ENCODE measurements at regions of chr2 and their contacts with region 1.

Region 1: GRCh38 chr2:237291138-237291792 is 122.7 kb downstream of the COL6A3 start:
- DNase-seq: peak; percentile 98
- H3K4me3 Mint-ChIP-seq: peak overlapping the region; percentile 63
- H3K27ac Mint-ChIP-seq: peak overlapping the region; percentile 99
- H3K4me1 Mint-ChIP-seq: peaks cover 40% of the 10 kb centered on the region
- H3K27me3 Mint-ChIP-seq: no peaks in the 10 kb centered on the region
- CTCF ChIP-seq: no peak

Region 2: DNA sequence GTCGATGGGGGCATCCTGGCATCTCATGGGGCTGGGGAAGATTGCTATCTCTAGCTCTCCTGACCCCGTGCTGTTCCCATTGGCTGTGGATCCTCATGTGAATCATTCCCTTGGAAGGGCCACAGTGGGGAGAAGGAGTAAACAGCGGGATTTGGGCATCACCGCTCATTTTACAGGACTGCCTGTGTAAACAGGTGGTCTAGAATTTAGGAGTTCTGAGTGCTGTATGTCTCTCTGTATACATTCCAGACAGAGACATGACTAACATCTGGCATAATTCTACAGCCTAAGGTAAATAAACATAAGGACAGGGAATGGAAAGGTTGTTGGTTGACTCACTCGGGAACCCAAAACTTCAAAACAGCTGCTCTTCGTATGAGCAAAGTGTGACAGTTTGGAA is 112.9 kb before region 1 on chr2:
- CTCF ChIA-PET with region 1: interaction called, 4 read pairs
- POLR2A ChIA-PET with region 1: interaction called, 3 read pairs
- intact Hi-C with region 1: loop called (anchors 1 kb)
- DNase-seq: peak; percentile 81
- H3K4me3 Mint-ChIP-seq: no peak overlapping the region
- H3K27ac Mint-ChIP-seq: peak overlapping the region; percentile 54
- H3K4me1 Mint-ChIP-seq: peaks cover 28% of the 10 kb centered on the region
- H3K27me3 Mint-ChIP-seq: no peaks in the 10 kb centered on the region
- CTCF ChIP-seq: no peak

Region 3: DNA sequence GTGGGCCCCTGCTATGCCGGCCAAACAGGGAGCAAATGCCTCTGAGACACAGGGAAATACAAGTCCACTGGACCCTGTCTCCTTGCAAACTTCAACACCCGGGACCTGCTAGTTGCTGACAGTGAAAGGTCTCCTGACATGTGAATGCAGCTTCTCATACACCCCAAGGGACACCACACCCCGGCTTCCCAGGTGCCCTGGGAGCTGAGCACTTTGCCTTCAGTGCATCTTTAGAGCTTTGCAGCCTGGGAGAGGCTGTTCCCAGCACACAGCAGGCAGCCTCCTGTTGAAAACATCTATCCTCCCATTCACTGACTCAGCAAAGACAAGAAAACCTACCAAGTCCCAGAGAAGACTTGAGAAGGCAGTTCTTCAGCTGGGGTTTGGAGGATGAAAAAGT is 20.7 kb before region 1 on chr2:
- CTCF ChIA-PET with region 1: interaction called, 3 read pairs
- POLR2A ChIA-PET with region 1: interaction called, 10 read pairs
- intact Hi-C with region 1: no loop called
- DNase-seq: no peak
- H3K4me3 Mint-ChIP-seq: no peak overlapping the region
- H3K27ac Mint-ChIP-seq: no peak overlapping the region
- H3K4me1 Mint-ChIP-seq: peaks cover 4% of the 10 kb centered on the region
- H3K27me3 Mint-ChIP-seq: no peaks in the 10 kb centered on the region
- CTCF ChIP-seq: no peak

Region 4: DNA sequence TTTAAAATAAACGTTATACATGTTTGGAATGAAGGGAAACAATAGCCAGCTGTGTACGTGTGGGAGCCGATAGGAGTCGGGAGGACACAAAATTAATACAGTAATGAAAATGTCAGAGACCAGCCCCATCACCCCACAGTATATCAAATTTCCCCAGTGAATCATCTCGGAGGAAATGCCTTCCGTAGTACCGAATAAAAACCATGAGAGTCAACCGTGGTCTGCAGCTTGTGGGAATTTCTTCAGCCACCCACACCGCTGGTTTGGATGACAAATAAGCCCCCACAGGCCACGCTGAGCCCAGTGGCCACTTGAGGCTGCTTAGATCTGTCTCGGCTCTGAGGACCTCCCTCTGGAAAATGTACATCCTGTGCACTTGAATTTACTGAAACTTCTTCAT is 11.0 kb before region 1 on chr2:
- CTCF ChIA-PET with region 1: interaction called, 4 read pairs
- POLR2A ChIA-PET with region 1: interaction called, 17 read pairs
- intact Hi-C with region 1: no loop called
- DNase-seq: peak; percentile 54
- H3K4me3 Mint-ChIP-seq: no peak overlapping the region
- H3K27ac Mint-ChIP-seq: no peak overlapping the region
- H3K4me1 Mint-ChIP-seq: peaks cover 22% of the 10 kb centered on the region
- H3K27me3 Mint-ChIP-seq: no peaks in the 10 kb centered on the region
- CTCF ChIP-seq: no peak

Region 5: GRCh38 chr2:237408335-237409000 is 117.2 kb after region 1 on chr2:
- CTCF ChIA-PET with region 1: interaction called, 4 read pairs
- POLR2A ChIA-PET with region 1: interaction called, 12 read pairs
- intact Hi-C with region 1: no loop called
- DNase-seq: no peak
- H3K4me3 Mint-ChIP-seq: no peak overlapping the region
- H3K27ac Mint-ChIP-seq: no peak overlapping the region
- H3K4me1 Mint-ChIP-seq: no peaks in the 10 kb centered on the region
- H3K27me3 Mint-ChIP-seq: no peaks in the 10 kb centered on the region
- CTCF ChIP-seq: no peak

Region 6: DNA sequence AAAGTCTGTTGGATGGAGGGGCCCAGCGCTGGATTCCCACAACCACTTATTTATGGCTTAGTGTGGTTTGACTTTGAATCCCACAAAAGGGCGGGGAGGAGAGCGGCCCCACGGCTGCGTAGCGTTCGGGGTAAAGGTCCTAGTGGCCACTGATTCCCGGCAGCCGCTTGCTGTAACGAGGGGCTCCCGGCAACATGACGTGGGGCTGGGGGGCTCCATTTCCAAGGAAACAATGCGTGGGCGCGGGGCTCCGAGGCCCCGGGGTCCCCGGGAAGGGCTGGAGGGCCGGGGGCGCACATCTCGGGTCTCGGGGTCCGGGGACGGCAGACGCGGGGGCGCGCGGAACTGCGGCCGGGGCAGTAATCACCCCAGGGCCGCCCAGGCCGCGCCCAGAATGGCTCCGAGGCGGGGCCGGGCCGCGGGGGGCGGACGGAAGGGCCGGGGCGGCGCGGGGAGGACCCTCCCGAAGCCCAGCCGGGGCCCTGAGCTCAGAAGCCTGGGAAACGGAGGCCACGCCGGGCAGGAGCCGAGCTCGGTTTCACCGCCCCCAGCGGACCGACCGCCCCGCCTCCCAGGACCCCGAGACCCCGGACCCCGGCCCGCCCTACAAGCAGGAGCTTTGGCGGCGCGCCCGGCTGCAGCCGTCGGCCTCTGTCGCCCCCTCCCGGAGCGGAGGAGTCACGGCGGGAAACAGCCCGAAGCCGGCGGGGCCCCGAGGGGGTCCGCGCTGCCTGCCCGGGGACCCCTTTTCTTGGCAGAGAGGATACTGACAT is 183.9 kb after region 1 on chr2:
- CTCF ChIA-PET with region 1: no interaction called
- POLR2A ChIA-PET with region 1: no interaction called
- intact Hi-C with region 1: no loop called
- DNase-seq: peak; percentile 65
- H3K4me3 Mint-ChIP-seq: peak overlapping the region; percentile 79
- H3K27ac Mint-ChIP-seq: peak overlapping the region; percentile 94
- H3K4me1 Mint-ChIP-seq: peaks cover 9% of the 10 kb centered on the region
- H3K27me3 Mint-ChIP-seq: no peaks in the 10 kb centered on the region
- CTCF ChIP-seq: peak; percentile 92